Heart right ventricle (tissue), 16 donors: ENCODE measurements at regions of chr12 and their contacts with region 1.

Region 1: DNA sequence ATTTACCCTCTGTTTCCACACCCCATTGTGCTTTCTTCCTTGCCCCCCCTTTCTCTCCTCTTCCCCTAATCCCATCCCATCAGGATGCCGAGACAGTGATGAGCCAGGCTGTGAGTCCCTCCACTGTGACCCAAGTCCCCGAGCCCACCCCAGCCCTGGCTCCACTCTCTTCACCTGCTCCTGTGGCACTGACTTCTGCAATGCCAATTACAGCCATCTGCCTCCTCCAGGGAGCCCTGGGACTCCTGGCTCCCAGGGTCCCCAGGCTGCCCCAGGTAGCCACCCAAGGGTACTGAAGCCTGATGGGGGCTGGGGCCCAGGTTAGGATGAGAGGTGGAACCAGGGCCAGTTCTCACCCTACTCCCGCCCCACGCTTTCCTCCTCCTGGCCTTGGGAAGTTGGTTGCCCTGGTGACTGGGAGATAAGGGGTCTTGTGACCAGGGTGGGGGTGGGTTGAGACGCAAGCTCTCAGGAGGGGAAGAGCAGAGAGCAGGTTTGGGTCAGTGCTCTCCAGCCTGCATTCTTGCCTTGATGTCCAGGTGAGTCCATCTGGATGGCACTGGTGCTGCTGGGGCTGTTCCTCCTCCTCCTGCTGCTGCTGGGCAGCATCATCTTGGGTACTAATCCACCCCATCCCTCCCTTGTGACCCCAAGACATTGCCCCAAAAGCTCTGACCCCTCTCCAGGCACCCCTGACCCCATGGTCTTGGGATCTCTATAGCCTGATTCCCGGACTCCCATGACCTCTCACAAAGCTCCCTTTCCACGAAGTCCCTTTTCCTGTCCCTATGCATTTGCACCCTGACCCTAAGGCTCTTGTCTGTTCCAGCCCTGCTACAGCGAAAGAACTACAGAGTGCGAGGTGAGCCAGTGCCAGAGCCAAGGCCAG is 1.2 kb downstream of the AMHR2 start:
- DNase-seq: no peak
- ATAC-seq: peak in 1 of 8 donors; percentile 4
- H3K4me3 ChIP-seq: no peak overlapping the region
- H3K27ac ChIP-seq: no peak overlapping the region
- H3K4me1 ChIP-seq: peaks cover 0 to 11% (median 8%) of the 10 kb centered on the region in 9 donors
- H3K27me3 ChIP-seq: no peaks in the 10 kb centered on the region
- CTCF ChIP-seq: no peak

Region 2: GRCh38 chr12:53508534-53509199 is 83.8 kb after region 1 on chr12:
- intact Hi-C with region 1: loop called in 2 of 10 experiments (anchors 5 kb)
- DNase-seq: peak; percentile 86 to 88
- ATAC-seq: peak; percentile 77 to 91 (median 89)
- H3K4me3 ChIP-seq: no peak overlapping the region
- H3K27ac ChIP-seq: peak overlapping the region in 9 of 10 donors; percentile 17 to 74 (median 44)
- H3K4me1 ChIP-seq: peaks cover 0 to 14% (median 10%) of the 10 kb centered on the region in 9 donors
- H3K27me3 ChIP-seq: no peaks in the 10 kb centered on the region
- CTCF ChIP-seq: peak; percentile 86 to 96 (median 93)